GM12878 (cell line): ENCODE measurements at regions of chr10 and their contacts with region 1.

Region 1: DNA sequence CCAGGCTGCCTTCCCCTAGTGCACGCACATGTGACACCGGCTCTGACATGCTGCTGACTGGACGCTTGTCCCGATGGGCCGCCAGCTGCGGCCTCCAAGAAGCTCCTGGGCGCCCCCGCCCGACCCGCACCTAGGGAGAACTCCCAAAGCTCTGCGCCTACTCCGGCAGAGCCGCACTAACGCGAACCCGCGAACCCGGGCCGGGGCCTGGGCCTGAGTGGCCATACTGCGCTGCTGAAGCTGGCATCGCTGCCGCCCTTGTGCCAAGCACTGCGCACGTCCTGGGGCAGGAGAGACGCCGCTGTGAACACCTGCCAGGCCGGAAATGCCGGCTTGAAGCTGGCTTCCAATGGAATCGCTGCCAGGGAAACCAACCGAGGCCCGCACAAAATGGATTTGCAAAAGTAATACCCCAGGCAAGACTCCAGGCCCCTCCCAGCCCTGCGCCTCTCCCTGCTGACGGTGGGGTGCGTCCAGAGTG is 85.1 kb downstream of the WASHC2A start:
- DNase-seq: no peak
- ATAC-seq: no peak
- H3K4me3 ChIP-seq: no peak overlapping the region
- H3K27ac ChIP-seq: no peak overlapping the region
- H3K4me1 ChIP-seq: no peaks in the 10 kb centered on the region
- H3K27me3 ChIP-seq: no peaks in the 10 kb centered on the region
- CTCF ChIP-seq: no peak
- EP300 ChIP-seq: no peak
- POLR2A ChIP-seq: no peak
- RAD21 ChIP-seq: no peak

Region 2: GRCh38 chr10:50021646-50022045 is 131.2 kb before region 1 on chr10:
- CTCF ChIA-PET with region 1: no interaction called
- POLR2A ChIA-PET with region 1: no interaction called
- RAD21 ChIA-PET with region 1: no interaction called
- SMC1A ChIA-PET with region 1: no interaction called
- in situ Hi-C with region 1: loop called (anchors 10 kb)
- intact Hi-C with region 1: no loop called
- DNase-seq: no peak
- ATAC-seq: no peak
- H3K4me3 ChIP-seq: no peak overlapping the region
- H3K27ac ChIP-seq: no peak overlapping the region
- H3K4me1 ChIP-seq: no peaks in the 10 kb centered on the region
- H3K27me3 ChIP-seq: no peaks in the 10 kb centered on the region
- CTCF ChIP-seq: no peak
- EP300 ChIP-seq: no peak
- POLR2A ChIP-seq: no peak
- RAD21 ChIP-seq: no peak

Region 3: GRCh38 chr10:50464004-50464409 is 311.2 kb after region 1 on chr10:
- CTCF ChIA-PET with region 1: no interaction called
- POLR2A ChIA-PET with region 1: no interaction called
- RAD21 ChIA-PET with region 1: no interaction called
- SMC1A ChIA-PET with region 1: no interaction called
- in situ Hi-C with region 1: no loop called
- intact Hi-C with region 1: no loop called
- DNase-seq: no peak
- ATAC-seq: no peak
- H3K4me3 ChIP-seq: no peak overlapping the region
- H3K27ac ChIP-seq: no peak overlapping the region
- H3K4me1 ChIP-seq: peaks cover 24% of the 10 kb centered on the region
- H3K27me3 ChIP-seq: no peaks in the 10 kb centered on the region; a peak in 1 of 4 replicates
- CTCF ChIP-seq: no peak
- EP300 ChIP-seq: no peak
- POLR2A ChIP-seq: no peak
- RAD21 ChIP-seq: no peak